Cardiac septum (tissue), 1 donor: ENCODE measurements at regions of chr16 and their contacts with region 1.

Region 1: DNA sequence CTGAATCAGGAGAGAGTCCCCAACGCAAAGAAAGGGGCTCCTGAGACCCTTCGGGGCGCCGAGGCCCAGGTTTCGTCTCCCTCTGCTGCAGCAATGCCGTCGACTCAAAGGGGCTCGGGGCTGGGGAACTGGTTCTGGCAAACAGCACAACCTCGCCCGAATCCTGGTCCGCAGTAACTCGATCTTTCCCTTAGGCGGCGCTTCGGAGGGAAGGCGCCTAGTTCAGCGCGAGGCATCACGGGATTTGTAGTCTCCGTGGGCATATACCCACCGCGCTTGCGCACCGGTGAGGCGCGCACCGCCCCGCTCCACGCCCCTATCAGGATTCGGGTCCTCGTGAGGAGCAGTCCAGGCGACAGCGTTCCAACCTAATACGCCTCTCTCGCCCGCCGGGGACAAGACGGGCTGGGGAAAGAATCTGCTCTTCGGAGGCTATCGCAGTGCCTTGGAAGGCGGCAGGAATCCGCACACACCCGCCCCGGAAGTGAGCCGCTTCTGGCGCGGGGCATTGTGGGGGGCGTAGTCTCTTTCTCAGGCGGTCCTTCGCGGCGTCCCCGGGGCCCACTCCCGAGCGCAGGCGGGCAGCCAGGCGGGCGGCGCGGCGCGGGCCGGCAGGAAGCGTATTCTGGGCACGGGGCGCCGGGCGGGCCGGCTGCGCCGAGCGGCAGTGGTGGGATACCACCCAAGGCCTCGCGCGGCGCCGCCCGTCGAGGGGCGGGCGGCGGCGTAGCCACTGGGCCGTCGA is at the start of gene THAP11:
- DNase-seq: peak; percentile 97
- total RNA-seq, gene THAP11: 23.0 TPM

Region 2: GRCh38 chr16:67862623-67863583 is 21.0 kb after region 1 on chr16:
- intact Hi-C with region 1: loop called (anchors 2 kb)
- DNase-seq: peak; percentile 93

Region 3: DNA sequence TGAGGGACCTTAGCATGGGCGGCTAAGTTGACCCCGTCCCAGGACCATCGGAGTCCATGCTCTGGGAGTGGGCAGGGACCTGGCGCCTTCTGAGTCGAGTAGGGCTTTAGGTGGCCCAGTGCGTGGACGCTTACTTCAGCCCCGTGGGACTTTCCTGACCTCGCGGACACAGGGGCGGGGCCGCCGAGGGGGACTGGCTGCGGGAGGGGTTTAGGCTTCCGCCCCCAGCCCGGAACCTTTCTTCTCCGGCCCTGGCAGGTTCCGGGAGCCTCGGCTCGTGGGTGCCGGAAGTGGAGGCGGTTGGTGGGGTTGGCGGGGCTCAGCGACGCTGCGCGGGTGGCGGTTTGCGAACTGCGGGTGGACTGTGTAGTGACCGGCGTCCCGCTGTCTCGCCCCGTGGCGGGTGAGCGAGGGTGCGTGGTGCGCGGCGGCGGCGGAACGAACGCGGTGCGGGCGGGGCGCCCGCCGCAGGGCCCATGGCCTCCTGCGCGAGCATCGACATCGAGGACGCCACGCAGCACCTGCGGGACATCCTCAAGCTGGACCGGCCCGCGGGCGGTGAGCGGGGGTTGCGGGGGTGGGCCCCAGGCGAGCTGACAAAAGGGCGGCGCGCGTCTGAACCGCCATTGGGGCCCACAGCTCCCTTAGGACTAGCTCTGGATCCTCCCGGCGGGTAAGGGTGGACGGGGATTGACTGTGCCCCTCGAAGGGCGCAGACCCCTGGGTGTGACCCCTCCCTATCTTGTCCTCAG is 31.0 kb after region 1 on chr16 and contains the start of gene EDC4:
- intact Hi-C with region 1: loop called (anchors 2 kb)
- DNase-seq: peak; percentile 92
- total RNA-seq, gene EDC4: 43.8 TPM